ENCODE measurements at regions of chr16 and their contacts with region 1.

Region 1: DNA sequence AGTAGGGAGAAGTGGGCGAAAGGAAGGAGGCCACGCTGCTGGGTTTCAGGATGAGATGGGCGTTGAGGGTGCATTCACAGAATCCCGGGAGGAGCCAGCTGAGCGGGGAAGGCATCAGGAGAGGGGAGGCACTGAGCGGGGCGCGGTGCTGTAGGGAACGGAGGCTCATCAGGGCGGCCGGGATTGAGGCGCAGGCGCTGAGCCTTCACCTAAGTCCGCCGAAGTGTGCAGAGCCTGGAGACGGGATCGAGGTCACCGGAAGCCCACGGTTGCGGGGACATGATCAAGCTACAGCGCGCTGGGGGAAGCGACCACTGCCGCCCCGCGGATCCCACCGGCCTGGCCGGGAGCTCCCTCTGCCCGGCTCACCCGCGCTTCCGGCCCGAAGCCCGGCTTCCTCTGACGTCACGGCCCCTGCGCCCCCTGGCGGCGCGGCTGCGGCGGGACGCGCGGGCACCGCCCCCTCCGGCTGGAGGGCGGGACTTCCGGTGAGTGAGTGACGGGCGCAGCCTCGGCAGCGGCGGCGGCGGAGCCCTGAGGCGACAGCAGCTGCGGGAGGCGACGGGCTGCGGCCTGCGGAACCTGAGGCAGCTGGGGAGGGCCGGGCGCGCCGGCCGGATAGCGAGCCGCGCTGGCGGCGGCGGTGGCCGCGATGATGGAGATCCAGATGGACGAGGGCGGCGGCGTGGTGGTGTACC is at the start of gene MAPK8IP3:
- H3K4me3 ChIP-seq: peak within 1 kb of the TSS; percentile 94
- H3K27ac ChIP-seq: peak within 1 kb of the TSS; percentile 83
- H3K4me1 ChIP-seq: peaks cover 11% of the 10 kb centered on the region; the same call in 1 of the 2 replicates
- CTCF ChIP-seq: peak; percentile 77

Region 2: GRCh38 chr16:1677802-1678496 is 27.9 kb before region 1 on chr16 and contains the start of gene JPT2:
- CTCF ChIA-PET with region 1: interaction called, 6 read pairs
- POLR2A ChIA-PET with region 1: interaction called, 44 read pairs
- H3K4me3 ChIP-seq: peak within 1 kb of the TSS; percentile 71
- H3K27ac ChIP-seq: peak within 1 kb of the TSS; percentile 95
- H3K4me1 ChIP-seq: no peaks in the 10 kb centered on the region; the same call in 1 of the 2 replicates
- CTCF ChIP-seq: no peak

Region 3: GRCh38 chr16:1691276-1691675 is 14.6 kb before region 1 on chr16:
- CTCF ChIA-PET with region 1: interaction called, 5 read pairs
- POLR2A ChIA-PET with region 1: interaction called, 16 read pairs
- H3K4me3 ChIP-seq: no peak overlapping the region
- H3K27ac ChIP-seq: no peak overlapping the region
- H3K4me1 ChIP-seq: no peaks in the 10 kb centered on the region; the same call in 1 of the 2 replicates
- CTCF ChIP-seq: no peak

Region 4: GRCh38 chr16:1772736-1773584 is 67.1 kb after region 1 on chr16 and contains the starts of genes EME2 and MRPS34:
- CTCF ChIA-PET with region 1: interaction called, 3 read pairs
- POLR2A ChIA-PET with region 1: interaction called, 10 read pairs
- H3K4me3 ChIP-seq: peak within 1 kb of the TSS; percentile 95
- H3K27ac ChIP-seq: peak within 1 kb of the TSS; percentile 94
- H3K4me1 ChIP-seq: peaks cover 9% of the 10 kb centered on the region
- CTCF ChIP-seq: peak; percentile 98